ENCODE measurements at regions of chr2 and their contacts with region 1.

Region 1: GRCh38 chr2:46915811-46916630 is 415 bp upstream of the MCFD2 start:
- DNase-seq: peak; percentile 86
- H3K4me3 Mint-ChIP-seq: peak overlapping the region; percentile 88
- H3K27ac Mint-ChIP-seq: peak overlapping the region; percentile 86
- H3K4me1 Mint-ChIP-seq: peaks cover 38% of the 10 kb centered on the region
- H3K27me3 Mint-ChIP-seq: no peaks in the 10 kb centered on the region
- CTCF ChIP-seq: no peak

Region 2: DNA sequence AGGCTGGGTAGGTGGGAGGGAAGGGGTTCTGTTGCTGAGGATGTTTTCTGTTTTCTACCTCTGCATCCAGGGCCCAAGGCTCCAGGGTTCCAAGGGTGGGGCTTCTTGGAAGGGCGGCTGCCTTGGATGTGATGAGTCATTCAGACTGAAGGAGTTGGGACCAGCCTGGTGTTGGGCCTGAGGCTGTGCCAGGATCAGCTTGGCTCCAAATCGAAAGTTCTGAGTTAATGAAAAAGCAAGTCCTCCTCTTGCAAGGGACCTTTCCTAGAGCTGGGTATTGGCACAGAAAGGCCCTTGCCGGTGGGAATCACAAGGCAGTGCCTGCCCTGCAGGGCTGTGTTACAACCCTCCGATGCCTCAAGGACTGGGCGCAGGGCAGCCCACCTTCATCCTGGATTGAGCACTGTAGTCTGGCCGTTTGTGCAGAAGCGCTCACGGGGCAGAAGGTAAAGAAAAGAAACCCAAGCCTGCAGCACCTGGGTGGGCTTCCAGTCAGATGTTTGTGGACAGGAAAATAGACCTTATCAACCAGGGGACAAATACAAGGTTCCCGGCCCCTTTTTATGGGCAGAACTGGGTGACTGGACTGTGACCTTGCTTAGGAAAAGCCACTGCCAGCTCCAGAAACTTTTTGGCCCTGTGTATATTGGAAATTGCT is 52.1 kb after region 1 on chr2:
- CTCF ChIA-PET with region 1: interaction called, 3 read pairs
- intact Hi-C with region 1: loop called (anchors 2 kb)
- DNase-seq: peak; percentile 80
- H3K4me3 Mint-ChIP-seq: peak overlapping the region; percentile 57
- H3K27ac Mint-ChIP-seq: peak overlapping the region; percentile 83
- H3K4me1 Mint-ChIP-seq: peaks cover 60% of the 10 kb centered on the region
- H3K27me3 Mint-ChIP-seq: no peaks in the 10 kb centered on the region
- CTCF ChIP-seq: no peak

Measured in Calu3 (cell line).